Endothelial cell of umbilical vein (primary cell): ENCODE measurements at regions of chr2 and their contacts with region 1.

Region 1: GRCh38 chr2:240303896-240304745 is 131.3 kb upstream of the GPC1 start:
- DNase-seq: no peak
- H3K4me3 ChIP-seq: no peak overlapping the region
- H3K27ac ChIP-seq: no peak overlapping the region
- H3K4me1 ChIP-seq: no peaks in the 10 kb centered on the region
- H3K27me3 ChIP-seq: no peaks in the 10 kb centered on the region
- CTCF ChIP-seq: no peak
- POLR2A ChIP-seq: no peak

Region 2: DNA sequence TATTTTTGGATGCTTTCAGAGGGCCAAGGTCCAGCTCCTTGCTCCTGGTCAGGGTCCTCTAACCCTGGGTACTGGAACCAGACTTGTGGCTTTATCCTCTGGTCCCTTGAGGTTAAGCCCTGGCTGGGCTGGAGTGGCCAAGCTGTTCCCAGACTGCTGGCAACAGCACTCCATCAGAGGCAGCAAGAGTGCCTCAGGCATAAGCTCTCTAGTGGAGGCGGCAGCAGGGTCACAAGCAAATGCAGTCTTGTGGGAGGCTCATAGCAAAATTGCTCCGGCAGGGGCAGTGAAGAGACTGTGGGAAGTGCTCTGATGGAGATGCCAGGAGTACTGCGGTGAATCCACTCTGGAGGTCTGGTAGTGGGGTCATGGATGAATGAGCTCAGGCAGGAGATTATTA is 34.7 kb before region 1 on chr2:
- CTCF ChIA-PET with region 1: no interaction called
- POLR2A ChIA-PET with region 1: no interaction called
- dilution Hi-C with region 1: no loop called
- intact Hi-C with region 1: loop called (anchors 1 kb)
- DNase-seq: no peak
- H3K4me3 ChIP-seq: no peak overlapping the region
- H3K27ac ChIP-seq: no peak overlapping the region
- H3K4me1 ChIP-seq: no peaks in the 10 kb centered on the region
- H3K27me3 ChIP-seq: no peaks in the 10 kb centered on the region
- CTCF ChIP-seq: no peak
- POLR2A ChIP-seq: no peak

Region 3: GRCh38 chr2:240293557-240294461 is 10.3 kb before region 1 on chr2:
- CTCF ChIA-PET with region 1: no interaction called
- POLR2A ChIA-PET with region 1: no interaction called
- dilution Hi-C with region 1: no loop called
- intact Hi-C with region 1: no loop called
- DNase-seq: no peak
- H3K4me3 ChIP-seq: no peak overlapping the region
- H3K27ac ChIP-seq: no peak overlapping the region
- H3K4me1 ChIP-seq: no peaks in the 10 kb centered on the region
- H3K27me3 ChIP-seq: no peaks in the 10 kb centered on the region
- CTCF ChIP-seq: no peak
- POLR2A ChIP-seq: no peak

Region 4: DNA sequence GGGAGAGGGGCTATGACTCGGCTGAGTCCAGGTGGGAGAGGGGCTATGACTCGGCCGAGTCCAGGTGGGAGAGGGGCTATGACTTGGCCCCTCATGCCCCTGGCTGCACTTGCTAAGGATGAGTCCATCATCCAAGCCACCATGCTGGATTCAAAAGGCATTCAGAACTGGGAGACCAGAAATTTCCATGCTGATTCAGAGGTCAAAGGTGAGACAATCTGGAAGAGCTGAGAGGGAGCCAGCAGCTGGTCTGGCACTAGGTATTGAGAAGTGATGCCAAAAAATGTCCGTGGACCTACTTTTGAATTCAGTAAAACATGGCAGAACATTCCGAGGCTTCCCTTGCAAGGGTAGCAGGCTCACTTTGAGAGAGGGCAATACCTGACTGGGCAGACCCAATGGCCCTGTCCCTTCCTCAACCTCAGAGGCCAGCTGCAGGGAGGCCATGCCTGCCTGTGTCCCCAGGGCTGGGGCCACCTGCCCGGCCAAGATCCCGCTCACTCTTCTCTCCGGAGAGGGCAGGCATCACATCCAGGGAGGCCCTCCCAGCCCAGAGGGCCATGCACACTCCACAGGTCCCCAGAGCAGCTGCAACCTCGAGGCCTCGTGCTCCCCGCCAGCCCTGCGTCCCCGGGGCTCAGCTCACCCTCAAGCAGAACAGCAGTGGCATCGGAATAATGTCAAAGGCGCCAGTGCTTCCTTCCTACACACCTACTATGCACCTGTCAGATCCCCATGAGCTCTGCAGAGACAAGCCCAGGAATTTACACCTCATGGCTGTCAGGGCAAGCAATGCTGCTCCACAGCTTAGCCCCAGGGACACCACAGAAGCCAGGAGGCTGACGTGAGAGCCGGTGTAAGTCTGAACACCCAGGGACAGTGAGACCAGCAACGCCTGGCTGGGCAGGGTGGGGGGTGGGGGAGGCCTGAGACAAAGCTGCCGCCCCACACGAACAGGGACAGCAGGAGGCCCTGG is 51.2 kb after region 1 on chr2:
- CTCF ChIA-PET with region 1: no interaction called
- POLR2A ChIA-PET with region 1: no interaction called
- dilution Hi-C with region 1: no loop called
- intact Hi-C with region 1: no loop called
- DNase-seq: no peak
- H3K4me3 ChIP-seq: no peak overlapping the region
- H3K27ac ChIP-seq: no peak overlapping the region
- H3K4me1 ChIP-seq: no peaks in the 10 kb centered on the region
- H3K27me3 ChIP-seq: no peaks in the 10 kb centered on the region
- CTCF ChIP-seq: no peak
- POLR2A ChIP-seq: no peak

Region 5: DNA sequence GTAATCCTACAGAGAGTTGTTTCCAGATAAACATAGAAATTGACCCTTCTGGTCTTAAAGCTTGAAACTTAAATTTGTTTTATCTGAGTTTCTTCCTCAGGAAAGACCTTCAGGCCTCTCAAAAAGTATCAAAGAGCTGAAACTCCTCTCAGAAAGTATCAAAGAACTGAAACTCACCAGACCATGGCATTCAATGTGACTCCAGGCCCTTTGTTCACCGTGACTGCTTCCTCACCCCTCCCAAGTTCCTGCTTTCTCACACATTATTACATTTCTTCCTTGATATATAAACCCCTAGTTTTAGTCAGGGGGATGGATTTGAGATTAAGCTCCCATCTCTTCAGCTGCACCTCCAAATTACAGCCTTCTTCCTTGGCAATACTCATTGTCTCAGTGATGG is 247.7 kb after region 1 on chr2:
- CTCF ChIA-PET with region 1: no interaction called
- POLR2A ChIA-PET with region 1: no interaction called
- dilution Hi-C with region 1: no loop called
- intact Hi-C with region 1: no loop called
- DNase-seq: no peak
- H3K4me3 ChIP-seq: no peak overlapping the region
- H3K27ac ChIP-seq: no peak overlapping the region
- H3K4me1 ChIP-seq: peaks cover under 1% of the 10 kb centered on the region
- H3K27me3 ChIP-seq: no peaks in the 10 kb centered on the region
- CTCF ChIP-seq: no peak
- POLR2A ChIP-seq: no peak